ENCODE measurements at regions of chr15 and their contacts with region 1.

Region 1: DNA sequence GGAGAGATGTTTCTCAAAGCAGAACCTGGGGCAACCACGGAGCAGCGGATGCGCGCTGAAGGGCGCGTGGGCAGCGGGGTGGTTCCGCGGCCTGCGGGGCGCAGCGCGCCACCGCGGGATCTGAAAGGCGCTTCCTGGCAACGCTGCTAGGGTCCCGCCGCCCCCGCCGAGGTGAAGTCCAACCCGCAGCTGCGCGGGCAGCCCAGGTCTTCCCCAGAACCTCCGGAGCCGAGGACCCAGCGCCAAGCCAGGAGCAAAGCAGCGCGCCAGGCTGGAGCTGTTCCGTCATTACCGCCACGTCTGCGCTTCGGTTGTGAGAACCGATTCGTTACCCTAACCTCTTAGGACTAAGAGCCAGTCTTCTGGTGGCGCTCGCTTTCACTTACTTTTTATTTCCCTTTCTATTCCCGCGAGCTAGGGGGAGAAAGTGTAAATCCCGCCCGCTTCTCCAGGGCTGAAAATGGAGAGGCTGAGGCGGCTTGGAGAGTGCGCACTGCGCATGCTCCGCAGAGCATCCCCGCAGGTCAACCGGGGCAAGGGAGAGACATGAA is 3.2 kb upstream of the GABRG3 start:
- DNase-seq: no peak
- H3K4me3 ChIP-seq: no peak overlapping the region
- H3K27ac ChIP-seq: no peak overlapping the region
- H3K4me1 ChIP-seq: no peaks in the 10 kb centered on the region
- H3K27me3 ChIP-seq: no peaks in the 10 kb centered on the region
- CTCF ChIP-seq: no peak

Region 2: GRCh38 chr15:26453914-26454313 is 513.9 kb before region 1 on chr15:
- intact Hi-C with region 1: no loop called
- DNase-seq: no peak
- H3K4me3 ChIP-seq: no peak overlapping the region
- H3K27ac ChIP-seq: no peak overlapping the region
- H3K4me1 ChIP-seq: no peaks in the 10 kb centered on the region
- H3K27me3 ChIP-seq: no peaks in the 10 kb centered on the region
- CTCF ChIP-seq: no peak

Region 3: DNA sequence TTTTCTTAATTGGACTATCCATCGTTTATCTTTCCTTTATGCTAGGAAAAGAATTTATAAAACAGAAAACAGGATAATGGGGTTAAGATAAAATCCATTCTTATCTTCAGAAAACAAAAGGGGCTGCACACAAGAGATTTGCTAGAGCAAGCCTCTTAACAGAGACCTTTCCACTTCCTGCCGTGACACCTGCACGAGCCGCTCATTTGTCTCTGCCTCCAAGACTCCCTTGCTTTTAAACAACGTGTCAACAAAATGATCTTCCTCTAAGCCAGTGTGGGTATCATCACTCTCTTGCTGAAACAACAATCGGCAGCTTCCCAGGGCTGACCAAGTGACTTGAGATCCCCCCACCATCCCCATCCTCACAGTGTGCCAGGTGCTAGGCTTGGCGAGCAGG is 228.0 kb before region 1 on chr15:
- intact Hi-C with region 1: no loop called
- DNase-seq: no peak
- H3K4me3 ChIP-seq: no peak overlapping the region
- H3K27ac ChIP-seq: no peak overlapping the region
- H3K4me1 ChIP-seq: no peaks in the 10 kb centered on the region
- H3K27me3 ChIP-seq: no peaks in the 10 kb centered on the region
- CTCF ChIP-seq: no peak

Region 4: GRCh38 chr15:26910715-26911114 is 57.1 kb before region 1 on chr15:
- intact Hi-C with region 1: no loop called
- DNase-seq: no peak
- H3K4me3 ChIP-seq: no peak overlapping the region
- H3K27ac ChIP-seq: no peak overlapping the region
- H3K4me1 ChIP-seq: no peaks in the 10 kb centered on the region
- H3K27me3 ChIP-seq: no peaks in the 10 kb centered on the region
- CTCF ChIP-seq: no peak

Region 5: DNA sequence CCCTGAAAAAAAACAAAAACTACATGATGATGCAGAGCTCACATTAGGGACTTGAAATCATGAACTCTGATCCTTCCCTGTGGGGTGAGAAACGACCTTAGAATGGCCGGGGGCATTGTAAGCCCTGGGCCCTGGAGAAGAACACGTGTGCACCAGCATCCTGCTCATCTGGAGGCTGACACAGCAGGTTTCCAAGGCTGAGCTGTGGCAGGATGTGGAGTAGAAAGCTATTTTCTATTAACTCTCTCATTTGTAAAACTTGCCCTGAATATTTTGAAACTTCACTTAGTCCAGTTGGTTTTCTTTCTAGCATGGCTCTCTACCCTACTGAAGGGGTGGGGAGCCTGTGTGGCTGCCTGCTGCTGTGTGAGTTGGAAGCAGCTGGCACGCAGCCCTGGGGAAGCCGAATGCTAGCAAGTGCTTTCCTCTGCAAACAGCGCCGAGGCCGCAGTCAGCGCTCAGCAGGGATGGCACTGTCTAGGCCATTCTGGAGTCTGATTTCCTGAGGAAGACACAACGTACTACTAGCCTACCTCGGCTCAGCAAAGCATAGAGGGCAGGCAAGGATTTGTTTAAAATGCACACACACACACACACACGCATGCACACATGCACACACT is 61.2 kb after region 1 on chr15:
- intact Hi-C with region 1: loop called (anchors 10 kb)
- DNase-seq: no peak
- H3K4me3 ChIP-seq: no peak overlapping the region
- H3K27ac ChIP-seq: no peak overlapping the region
- H3K4me1 ChIP-seq: no peaks in the 10 kb centered on the region
- H3K27me3 ChIP-seq: no peaks in the 10 kb centered on the region
- CTCF ChIP-seq: no peak